Endothelial cell of umbilical vein (primary cell): ENCODE measurements at regions of chr1 and their contacts with region 1.

Region 1: DNA sequence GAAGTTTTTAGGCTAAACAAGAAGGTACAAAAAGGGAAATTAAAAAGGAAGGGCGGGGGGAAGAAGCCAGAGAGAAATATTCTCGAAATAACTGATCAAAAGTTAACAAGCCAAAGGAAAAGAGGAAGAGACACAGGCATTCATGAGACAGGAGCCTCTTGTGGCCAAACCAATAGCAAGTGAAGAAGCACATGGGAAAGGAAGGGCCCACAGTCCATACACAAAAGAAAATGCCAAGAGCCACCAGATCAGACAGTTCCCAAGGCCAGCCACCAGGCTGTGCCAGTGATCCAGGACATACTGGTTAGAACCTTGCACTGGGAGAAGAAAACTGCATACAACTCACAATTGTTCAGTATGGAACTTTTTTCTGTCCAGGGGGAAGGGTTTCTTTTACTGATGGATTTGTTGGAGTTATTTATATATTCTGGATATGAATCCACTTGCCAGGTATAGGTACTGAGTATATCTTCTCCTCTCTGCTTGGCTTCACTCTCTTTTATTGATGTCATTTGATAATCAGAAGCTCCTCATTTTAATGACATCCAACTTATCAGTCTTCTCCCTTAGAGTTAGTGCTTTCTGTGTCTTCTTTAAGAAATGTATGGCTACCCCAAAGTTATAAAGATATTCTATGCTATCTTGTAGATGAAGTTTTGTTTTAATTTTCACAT is 76.8 kb downstream of the CD46 start:
- DNase-seq: peak; percentile 96
- H3K4me3 ChIP-seq: no peak overlapping the region
- H3K27ac ChIP-seq: peak overlapping the region; percentile 14
- H3K4me1 ChIP-seq: peaks cover 45% of the 10 kb centered on the region
- H3K27me3 ChIP-seq: no peaks in the 10 kb centered on the region
- CTCF ChIP-seq: peak; percentile 82 to 94
- POLR2A ChIP-seq: peak; percentile 23

Region 2: DNA sequence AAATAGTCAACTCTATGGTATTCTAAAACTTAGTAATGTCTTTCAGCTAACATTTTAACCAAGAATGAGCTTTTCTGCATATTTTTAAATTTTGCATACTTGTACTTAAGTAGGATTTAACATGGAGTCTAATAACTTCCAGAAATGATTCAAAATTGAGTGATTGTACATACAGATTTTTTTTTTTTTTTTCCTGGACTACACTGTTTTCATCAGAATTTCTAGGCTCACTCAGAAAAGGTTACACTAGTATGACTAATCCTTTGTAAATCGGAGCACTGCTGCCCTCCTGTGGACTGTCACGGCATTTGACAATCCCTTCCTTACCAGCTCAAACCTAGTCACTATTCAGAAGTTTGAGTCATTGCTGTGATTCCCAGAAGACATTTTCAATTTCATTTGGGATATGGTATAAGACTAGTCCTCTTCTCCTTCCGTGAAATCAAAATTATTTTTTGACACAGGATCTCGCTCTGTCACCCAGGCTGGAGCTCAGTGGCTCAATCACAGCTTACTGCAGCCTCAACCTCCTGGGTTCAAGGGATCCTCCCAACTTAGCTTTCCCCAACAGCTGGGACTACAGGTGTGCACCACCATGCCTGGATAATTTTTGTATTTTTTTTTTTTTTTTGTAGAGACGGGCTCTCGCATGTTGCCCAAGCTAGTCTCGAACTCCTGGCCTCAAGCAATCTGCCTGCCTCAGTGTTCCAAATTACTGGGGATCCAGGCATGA is 31.2 kb before region 1 on chr1:
- CTCF ChIA-PET with region 1: interaction called, 19 read pairs
- POLR2A ChIA-PET with region 1: no interaction called
- dilution Hi-C with region 1: no loop called
- intact Hi-C with region 1: no loop called
- DNase-seq: peak; percentile 91
- H3K4me3 ChIP-seq: no peak overlapping the region
- H3K27ac ChIP-seq: peak overlapping the region; percentile 49
- H3K4me1 ChIP-seq: peaks cover 4% of the 10 kb centered on the region
- H3K27me3 ChIP-seq: no peaks in the 10 kb centered on the region
- CTCF ChIP-seq: peak; percentile 71 to 72
- POLR2A ChIP-seq: peak; percentile 40

Region 3: DNA sequence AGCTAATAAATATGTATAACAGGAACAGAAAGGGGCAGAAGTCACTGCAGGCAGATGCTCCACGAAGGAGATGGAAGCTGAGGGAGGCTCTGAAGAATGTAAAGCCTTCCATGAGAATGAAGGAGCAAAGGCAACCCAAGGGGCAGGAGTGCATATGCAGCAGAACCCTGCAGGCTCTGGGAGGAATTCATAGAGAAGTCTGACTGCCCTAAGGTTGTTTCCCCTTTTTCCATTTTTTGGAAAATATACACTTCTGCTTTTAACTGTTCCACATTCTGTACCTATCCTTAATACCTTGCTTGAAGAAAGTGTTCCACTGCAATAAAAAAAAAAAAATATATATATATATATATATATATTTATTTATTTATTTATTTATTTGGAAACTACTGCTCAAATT is 12.7 kb after region 1 on chr1:
- CTCF ChIA-PET with region 1: interaction called, 18 read pairs
- POLR2A ChIA-PET with region 1: no interaction called
- dilution Hi-C with region 1: no loop called
- intact Hi-C with region 1: no loop called
- DNase-seq: no peak
- H3K4me3 ChIP-seq: no peak overlapping the region
- H3K27ac ChIP-seq: no peak overlapping the region
- H3K4me1 ChIP-seq: peaks cover 2% of the 10 kb centered on the region
- H3K27me3 ChIP-seq: no peaks in the 10 kb centered on the region
- CTCF ChIP-seq: no peak
- POLR2A ChIP-seq: no peak

Region 4: DNA sequence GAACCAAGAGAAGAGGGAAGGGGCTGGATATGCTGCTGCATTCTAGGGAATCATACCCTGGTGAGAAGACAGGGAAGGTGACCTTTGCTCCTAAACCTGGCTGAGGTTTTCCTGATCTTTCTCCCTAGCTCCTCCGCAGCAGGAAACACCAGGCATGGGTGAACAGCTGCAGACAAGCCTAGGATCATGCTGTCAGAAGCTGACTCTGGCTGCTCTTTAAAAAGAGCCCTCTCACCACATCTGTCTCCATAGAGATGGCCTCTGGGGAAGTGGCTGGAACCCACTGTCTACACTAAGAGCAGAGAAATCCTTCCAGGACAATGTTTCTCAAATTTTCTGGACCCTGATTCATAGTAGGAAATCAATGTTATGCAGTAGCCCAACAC is 24.7 kb after region 1 on chr1:
- CTCF ChIA-PET with region 1: interaction called, 21 read pairs
- POLR2A ChIA-PET with region 1: no interaction called
- dilution Hi-C with region 1: no loop called
- intact Hi-C with region 1: loop called (anchors 1 kb)
- DNase-seq: peak; percentile 42
- H3K4me3 ChIP-seq: no peak overlapping the region
- H3K27ac ChIP-seq: peak overlapping the region; percentile 19
- H3K4me1 ChIP-seq: peaks cover 33% of the 10 kb centered on the region
- H3K27me3 ChIP-seq: no peaks in the 10 kb centered on the region
- CTCF ChIP-seq: no peak
- POLR2A ChIP-seq: peak; percentile 48

Region 5: GRCh38 chr1:207897188-207897587 is 68.6 kb after region 1 on chr1:
- CTCF ChIA-PET with region 1: interaction called, 20 read pairs
- POLR2A ChIA-PET with region 1: no interaction called
- dilution Hi-C with region 1: no loop called
- intact Hi-C with region 1: no loop called
- DNase-seq: peak; percentile 57
- H3K4me3 ChIP-seq: no peak overlapping the region
- H3K27ac ChIP-seq: no peak overlapping the region
- H3K4me1 ChIP-seq: peaks cover 6% of the 10 kb centered on the region
- H3K27me3 ChIP-seq: no peaks in the 10 kb centered on the region
- CTCF ChIP-seq: peak; percentile 8 to 11
- POLR2A ChIP-seq: no peak

Region 6: DNA sequence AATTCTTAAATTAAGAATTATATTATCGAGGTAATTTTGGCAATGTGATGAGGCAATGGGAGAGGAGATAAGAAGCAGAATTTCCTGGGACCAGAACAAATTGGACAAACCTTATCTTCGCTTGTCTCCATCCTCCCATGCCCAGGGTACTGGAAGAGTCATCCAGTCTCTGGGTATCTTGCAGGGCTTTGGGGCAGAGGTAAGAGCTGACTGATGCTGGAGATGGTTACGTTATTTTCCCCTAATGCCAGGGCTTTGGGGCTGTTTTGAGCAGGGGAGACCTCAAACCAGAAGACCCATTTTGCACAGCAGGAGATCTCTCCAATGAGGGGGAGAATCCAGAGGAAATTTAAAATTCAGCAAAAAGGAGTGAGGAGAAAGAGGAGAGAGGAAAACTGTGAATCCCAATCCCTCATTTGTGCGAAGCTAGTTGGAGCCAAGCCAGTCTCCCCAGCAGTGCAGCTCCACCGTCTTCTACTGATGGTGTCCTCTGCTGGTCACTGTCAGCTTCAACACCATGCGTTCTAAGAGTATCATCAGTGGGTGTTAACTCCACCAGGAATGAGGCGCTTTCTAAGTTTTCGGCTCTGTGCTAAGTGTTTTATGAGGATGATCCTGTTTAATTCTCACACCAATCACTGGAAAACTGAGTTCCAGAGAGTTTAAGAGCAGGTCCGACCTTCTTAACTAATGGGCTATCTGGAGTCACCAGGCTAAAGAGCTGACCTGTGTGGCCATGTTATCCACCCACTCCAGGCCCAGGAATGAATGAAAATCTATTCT is 169.1 kb after region 1 on chr1:
- CTCF ChIA-PET with region 1: interaction called, 17 read pairs
- POLR2A ChIA-PET with region 1: no interaction called
- dilution Hi-C with region 1: no loop called
- intact Hi-C with region 1: loop called (anchors 1 kb)
- DNase-seq: peak; percentile 75
- H3K4me3 ChIP-seq: no peak overlapping the region
- H3K27ac ChIP-seq: no peak overlapping the region
- H3K4me1 ChIP-seq: no peaks in the 10 kb centered on the region
- H3K27me3 ChIP-seq: peaks cover 14 to 29% of the 10 kb centered on the region in 2 experiments
- CTCF ChIP-seq: peak; percentile 89 to 92
- POLR2A ChIP-seq: no peak